ENCODE measurements at regions of chr11 and their contacts with region 1.

Region 1: GRCh38 chr11:65128148-65129145 is 5.9 kb downstream of the SYVN1 start:
- DNase-seq: no peak
- H3K4me3 ChIP-seq: no peak overlapping the region
- H3K27ac ChIP-seq: no peak overlapping the region
- H3K4me1 ChIP-seq: peaks cover 5 to 18% (median 16%) of the 10 kb centered on the region in 4 experiments
- H3K27me3 ChIP-seq: no peaks in the 10 kb centered on the region

Region 2: GRCh38 chr11:65102142-65103095 is 26.0 kb before region 1 on chr11:
- CTCF ChIA-PET with region 1: no interaction called
- POLR2A ChIA-PET with region 1: no interaction called
- DNase-seq: no peak
- H3K4me3 ChIP-seq: no peak overlapping the region
- H3K27ac ChIP-seq: no peak overlapping the region
- H3K4me1 ChIP-seq: peaks cover 0 to 2% (median under 1%) of the 10 kb centered on the region in 4 experiments
- H3K27me3 ChIP-seq: no peaks in the 10 kb centered on the region

Region 3: GRCh38 chr11:65117216-65118096 is 11.0 kb before region 1 on chr11 and contains the start of gene ZNHIT2:
- CTCF ChIA-PET with region 1: interaction called, 15 read pairs
- POLR2A ChIA-PET with region 1: interaction called, 37 read pairs
- DNase-seq: peak; percentile 99 to 100 (median 99)
- H3K4me3 ChIP-seq: peak within 1 kb of the TSS; percentile 50 to 90 (median 88)
- H3K27ac ChIP-seq: peak within 1 kb of the TSS; percentile 68 to 86
- H3K4me1 ChIP-seq: peaks cover 6 to 52% (median 36%) of the 10 kb centered on the region in 4 experiments
- H3K27me3 ChIP-seq: no peaks in the 10 kb centered on the region

Region 4: DNA sequence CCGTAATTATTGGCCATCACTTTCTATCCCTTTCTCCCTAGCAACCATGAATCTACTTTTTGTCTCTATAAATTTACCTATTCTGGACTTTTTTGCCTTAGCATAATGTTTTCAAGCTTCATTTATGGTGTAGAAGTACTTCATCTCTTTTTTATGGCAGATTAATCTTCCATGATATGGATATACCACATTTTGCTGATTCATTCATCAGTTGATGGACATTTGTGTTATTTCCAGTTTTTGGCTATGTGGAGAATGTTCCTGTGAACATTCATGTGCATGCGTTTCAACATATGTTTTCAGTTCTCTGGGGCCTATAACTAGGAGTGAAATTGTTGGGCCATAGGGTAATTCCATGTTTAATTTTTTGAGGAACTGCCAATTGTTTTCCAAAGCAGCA is 66.1 kb after region 1 on chr11:
- CTCF ChIA-PET with region 1: no interaction called
- POLR2A ChIA-PET with region 1: no interaction called
- DNase-seq: no peak
- H3K4me3 ChIP-seq: no peak overlapping the region
- H3K27ac ChIP-seq: no peak overlapping the region
- H3K4me1 ChIP-seq: no peaks in the 10 kb centered on the region
- H3K27me3 ChIP-seq: no peaks in the 10 kb centered on the region